K562 (cell line): ENCODE measurements at regions of chr7 and their contacts with region 1.

Region 1: DNA sequence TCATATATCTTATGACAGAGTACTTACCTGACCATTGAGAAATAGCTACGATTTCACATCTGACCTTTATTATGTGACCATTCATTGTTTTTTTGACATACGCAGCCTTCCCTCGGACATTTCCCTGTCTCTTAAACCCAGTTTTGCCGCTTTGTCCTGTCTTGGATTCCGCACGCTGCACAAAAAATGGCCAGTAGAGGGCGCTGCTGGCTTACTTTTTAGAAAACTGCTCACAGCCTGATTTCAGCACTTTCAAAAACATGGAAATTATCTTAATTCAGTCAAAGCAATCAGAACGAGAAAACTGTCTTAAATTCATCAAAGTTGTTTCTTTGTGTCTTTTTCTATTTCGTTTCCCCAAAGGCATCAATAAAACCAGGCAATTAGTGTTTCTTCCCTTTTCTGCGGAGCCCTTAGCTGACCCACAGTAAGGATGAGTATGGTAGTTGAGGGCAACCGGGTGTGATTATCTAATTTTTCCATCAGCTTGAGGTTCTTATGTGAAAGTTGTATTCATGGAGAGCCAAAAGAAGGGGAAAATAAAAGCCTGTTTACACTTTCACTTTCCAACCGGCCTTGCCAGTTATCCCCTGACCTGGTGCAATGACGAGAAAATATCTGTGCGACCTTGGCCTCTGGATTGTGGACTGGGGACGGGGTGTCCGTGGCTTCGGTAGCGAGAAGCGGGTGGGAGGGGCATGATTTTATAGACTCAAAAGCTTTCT is 144.4 kb downstream of the DYNC1I1 start:
- DNase-seq: peak; percentile 64 to 84 (median 67)
- ATAC-seq: peak; percentile 97
- H3K4me3 ChIP-seq: no peak overlapping the region
- H3K27ac ChIP-seq: no peak overlapping the region
- H3K4me1 ChIP-seq: no peaks in the 10 kb centered on the region
- H3K27me3 ChIP-seq: no peaks in the 10 kb centered on the region; a peak in 1 of 5 replicates
- CTCF ChIP-seq: peak; percentile 79 to 95 (median 95)
- EP300 ChIP-seq: no peak
- POLR2A ChIP-seq: no peak
- RAD21 ChIP-seq: peak; percentile 78 to 81

Region 2: GRCh38 chr7:96075510-96076349 is 159.0 kb after region 1 on chr7:
- CTCF ChIA-PET with region 1: no interaction called
- POLR2A ChIA-PET with region 1: no interaction called
- in situ Hi-C with region 1: no loop called
- intact Hi-C with region 1: loop called (anchors 5 kb)
- DNase-seq: peak; percentile 66 to 76 (median 71)
- ATAC-seq: peak; percentile 97
- H3K4me3 ChIP-seq: peak overlapping the region; percentile 17
- H3K27ac ChIP-seq: no peak overlapping the region
- H3K4me1 ChIP-seq: peaks cover 0 to 9% of the 10 kb centered on the region in 2 experiments; a peak in 2 of 5 replicates
- H3K27me3 ChIP-seq: peaks cover 11 to 13% of the 10 kb centered on the region in 2 experiments
- CTCF ChIP-seq: peak; percentile 76 to 90 (median 83)
- EP300 ChIP-seq: no peak
- POLR2A ChIP-seq: no peak
- RAD21 ChIP-seq: peak; percentile 82 to 86

Region 3: GRCh38 chr7:96414931-96415292 is 498.2 kb after region 1 on chr7:
- CTCF ChIA-PET with region 1: no interaction called
- POLR2A ChIA-PET with region 1: no interaction called
- in situ Hi-C with region 1: no loop called
- intact Hi-C with region 1: loop called (anchors 2 kb)
- DNase-seq: peak; percentile 35 to 66 (median 45)
- ATAC-seq: peak; percentile 97
- H3K4me3 ChIP-seq: no peak overlapping the region
- H3K27ac ChIP-seq: no peak overlapping the region
- H3K4me1 ChIP-seq: no peaks in the 10 kb centered on the region
- H3K27me3 ChIP-seq: peaks cover 0 to 6% of the 10 kb centered on the region in 2 experiments; a peak in 1 of 5 replicates
- CTCF ChIP-seq: peak; percentile 83 to 84 (median 84)
- EP300 ChIP-seq: no peak
- POLR2A ChIP-seq: no peak
- RAD21 ChIP-seq: peak; percentile 81 to 83

Region 4: DNA sequence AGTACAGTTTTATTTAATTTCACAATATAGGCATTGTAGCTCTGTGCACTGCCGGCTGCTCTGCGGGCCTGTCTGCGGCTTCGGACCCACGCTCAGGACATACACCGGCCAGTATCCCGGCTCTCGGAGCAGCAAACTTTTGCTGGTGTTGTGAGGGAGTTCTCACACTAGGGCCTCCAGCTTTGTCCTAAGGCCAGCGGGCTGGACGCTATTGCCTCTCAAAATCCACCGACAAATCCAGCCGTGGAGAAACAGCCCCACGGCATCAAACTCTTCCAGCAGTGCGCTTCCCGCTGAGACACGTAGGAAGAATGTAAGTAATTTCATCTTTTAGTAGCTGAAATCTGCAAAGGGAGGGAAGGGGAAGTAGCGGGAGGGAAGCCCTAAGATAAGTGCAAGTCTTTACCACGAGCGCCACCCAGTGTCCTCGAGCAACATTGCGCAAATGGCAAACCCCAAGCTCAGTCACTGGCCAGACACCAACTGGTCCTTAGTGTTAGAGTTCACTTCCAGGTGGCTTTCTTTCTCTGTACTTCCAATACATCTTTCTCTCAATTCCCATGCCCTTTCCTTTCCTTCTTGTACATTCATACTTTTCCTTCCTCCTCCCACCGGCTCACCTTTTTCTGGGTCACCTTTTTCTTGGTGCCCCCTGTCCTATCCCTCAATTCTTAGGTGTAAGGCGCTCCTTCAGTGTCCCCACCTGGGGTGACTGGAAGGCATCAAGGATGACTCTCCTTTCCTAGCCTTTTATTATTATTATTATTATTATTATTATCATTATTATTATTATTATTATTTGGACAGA is 1110.9 kb after region 1 on chr7:
- CTCF ChIA-PET with region 1: interaction called, 16 read pairs
- POLR2A ChIA-PET with region 1: no interaction called
- in situ Hi-C with region 1: loop called (anchors 10 kb)
- intact Hi-C with region 1: loop called (anchors 1 kb)
- DNase-seq: peak; percentile 81 to 86 (median 82)
- ATAC-seq: peak; percentile 98
- H3K4me3 ChIP-seq: no peak overlapping the region
- H3K27ac ChIP-seq: no peak overlapping the region
- H3K4me1 ChIP-seq: peaks cover 0 to 9% of the 10 kb centered on the region in 2 experiments; a peak in 1 of 5 replicates
- H3K27me3 ChIP-seq: peaks cover 47 to 55% of the 10 kb centered on the region in 2 experiments
- CTCF ChIP-seq: peak; percentile 85 to 97 (median 96)
- EP300 ChIP-seq: no peak
- POLR2A ChIP-seq: no peak
- RAD21 ChIP-seq: peak; percentile 93 to 94

Region 5: GRCh38 chr7:97845622-97846203 is 1929.0 kb after region 1 on chr7:
- CTCF ChIA-PET with region 1: interaction called, 6 read pairs
- POLR2A ChIA-PET with region 1: no interaction called
- in situ Hi-C with region 1: loop called (anchors 10 kb)
- intact Hi-C with region 1: loop called (anchors 5 kb)
- DNase-seq: peak in 2 of 4 experiments; percentile 19 to 47
- ATAC-seq: peak; percentile 59
- H3K4me3 ChIP-seq: no peak overlapping the region
- H3K27ac ChIP-seq: no peak overlapping the region
- H3K4me1 ChIP-seq: no peaks in the 10 kb centered on the region; a peak in 1 of 5 replicates
- H3K27me3 ChIP-seq: no peaks in the 10 kb centered on the region
- CTCF ChIP-seq: peak; percentile 27 to 65 (median 36); a peak in 3 of 6 replicates
- EP300 ChIP-seq: no peak
- POLR2A ChIP-seq: no peak
- RAD21 ChIP-seq: peak; percentile 49 to 62